ENCODE measurements at regions of chr22 and their contacts with region 1.

Region 1: GRCh38 chr22:41285820-41286638 is at the start of gene RANGAP1:
- DNase-seq: peak; percentile 95 to 100 (median 98)
- ATAC-seq: peak; percentile 85
- H3K4me3 ChIP-seq: peak within 1 kb of the TSS; percentile 100
- H3K4me3 Mint-ChIP-seq: peak within 1 kb of the TSS; percentile 96
- H3K27ac ChIP-seq: peak within 1 kb of the TSS; percentile 95 to 100
- H3K27ac Mint-ChIP-seq: peak within 1 kb of the TSS; percentile 100
- H3K4me1 ChIP-seq: peaks cover 28% of the 10 kb centered on the region
- H3K4me1 Mint-ChIP-seq: peaks cover 46% of the 10 kb centered on the region
- H3K27me3 ChIP-seq: no peaks in the 10 kb centered on the region
- H3K27me3 Mint-ChIP-seq: no peaks in the 10 kb centered on the region
- CTCF ChIP-seq: no peak
- total RNA-seq, gene RANGAP1: 163 to 172 TPM

Region 2: DNA sequence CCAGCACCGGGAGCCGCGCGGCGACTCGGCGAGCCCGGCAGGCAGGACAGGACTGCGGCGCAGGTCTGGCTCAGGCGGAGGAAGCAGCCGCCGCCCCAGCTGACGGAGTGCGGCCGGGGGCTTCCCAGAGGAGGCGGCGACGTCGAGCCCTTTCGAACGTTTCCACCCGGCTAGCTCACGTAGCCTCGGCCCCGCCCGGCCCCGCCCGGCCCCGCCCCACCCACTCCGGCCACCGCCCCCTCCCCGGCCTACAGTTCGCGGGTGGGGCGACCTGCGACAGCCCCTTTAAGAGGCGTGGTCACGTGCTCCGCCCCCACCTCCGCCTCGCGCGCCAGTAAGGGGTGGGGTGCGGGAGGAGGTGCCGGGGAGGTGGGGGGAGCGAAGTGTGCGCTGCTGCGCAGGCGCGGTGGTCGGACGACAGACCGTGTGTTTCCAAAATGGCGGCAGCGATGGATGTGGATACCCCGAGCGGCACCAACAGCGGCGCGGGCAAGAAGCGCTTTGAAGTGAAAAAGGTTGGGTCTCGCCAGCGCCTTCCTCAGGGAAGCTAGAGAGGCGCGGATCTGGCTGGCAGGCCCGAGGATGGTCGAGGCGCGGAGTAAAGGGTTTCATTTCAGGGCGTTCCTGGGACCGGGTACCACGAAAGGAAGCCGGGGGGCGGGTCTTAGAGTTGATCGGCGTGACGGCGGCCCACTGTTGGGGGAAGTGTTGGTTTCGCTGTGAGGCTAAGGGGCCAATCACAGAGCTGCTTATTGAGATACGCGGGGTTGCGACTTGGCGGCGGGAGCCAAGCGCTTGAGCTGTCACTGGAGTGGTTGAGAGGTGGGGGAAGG is 334.9 kb before region 1 on chr22 and contains the start of gene RBX1:
- CTCF ChIA-PET with region 1: no interaction called
- POLR2A ChIA-PET with region 1: interaction called, 21 read pairs
- intact Hi-C with region 1: loop called in 1 of 2 experiments (anchors 1 kb)
- DNase-seq: peak; percentile 97 to 100 (median 99)
- ATAC-seq: peak; percentile 75
- H3K4me3 ChIP-seq: peak within 1 kb of the TSS; percentile 96
- H3K4me3 Mint-ChIP-seq: peak within 1 kb of the TSS; percentile 95
- H3K27ac ChIP-seq: peak within 1 kb of the TSS; percentile 98 to 100
- H3K27ac Mint-ChIP-seq: peak within 1 kb of the TSS; percentile 98
- H3K4me1 ChIP-seq: peaks cover 34% of the 10 kb centered on the region
- H3K4me1 Mint-ChIP-seq: peaks cover 40% of the 10 kb centered on the region
- H3K27me3 ChIP-seq: no peaks in the 10 kb centered on the region
- H3K27me3 Mint-ChIP-seq: no peaks in the 10 kb centered on the region
- CTCF ChIP-seq: no peak
- total RNA-seq, gene RBX1: 19.8 to 21.6 TPM

Region 3: GRCh38 chr22:41237707-41238569 is 48.1 kb before region 1 on chr22:
- CTCF ChIA-PET with region 1: interaction called, 8 read pairs
- POLR2A ChIA-PET with region 1: interaction called, 22 read pairs
- intact Hi-C with region 1: no loop called
- DNase-seq: peak; percentile 74 to 92 (median 84)
- ATAC-seq: peak; percentile 96
- H3K4me3 ChIP-seq: peak overlapping the region; percentile 44
- H3K4me3 Mint-ChIP-seq: peak overlapping the region; percentile 73
- H3K27ac ChIP-seq: no peak overlapping the region
- H3K27ac Mint-ChIP-seq: no peak overlapping the region
- H3K4me1 ChIP-seq: peaks cover 16% of the 10 kb centered on the region
- H3K4me1 Mint-ChIP-seq: peaks cover 5% of the 10 kb centered on the region
- H3K27me3 ChIP-seq: no peaks in the 10 kb centered on the region
- H3K27me3 Mint-ChIP-seq: no peaks in the 10 kb centered on the region
- CTCF ChIP-seq: no peak

Region 4: GRCh38 chr22:41381329-41382097 is 95.5 kb after region 1 on chr22 and contains the start of gene TEF:
- CTCF ChIA-PET with region 1: no interaction called
- POLR2A ChIA-PET with region 1: interaction called, 66 read pairs
- intact Hi-C with region 1: loop called (anchors 1 kb)
- DNase-seq: peak; percentile 96 to 99 (median 98)
- ATAC-seq: peak; percentile 79
- H3K4me3 ChIP-seq: peak within 1 kb of the TSS; percentile 66
- H3K4me3 Mint-ChIP-seq: peak within 1 kb of the TSS; percentile 98
- H3K27ac ChIP-seq: peak within 1 kb of the TSS; percentile 78 to 96
- H3K27ac Mint-ChIP-seq: peak within 1 kb of the TSS; percentile 99
- H3K4me1 ChIP-seq: peaks cover 20% of the 10 kb centered on the region
- H3K4me1 Mint-ChIP-seq: peaks cover 31% of the 10 kb centered on the region
- H3K27me3 ChIP-seq: no peaks in the 10 kb centered on the region
- H3K27me3 Mint-ChIP-seq: no peaks in the 10 kb centered on the region
- CTCF ChIP-seq: no peak
- total RNA-seq, gene TEF: 2.4 to 2.6 TPM

Region 5: GRCh38 chr22:41543854-41544670 is 258.0 kb after region 1 on chr22 and contains the start of gene POLR3H:
- CTCF ChIA-PET with region 1: no interaction called
- POLR2A ChIA-PET with region 1: no interaction called
- intact Hi-C with region 1: loop called in 1 of 2 experiments (anchors 10 kb)
- DNase-seq: peak; percentile 91 to 99 (median 96)
- ATAC-seq: peak; percentile 98
- H3K4me3 ChIP-seq: peak within 1 kb of the TSS; percentile 90
- H3K4me3 Mint-ChIP-seq: peak within 1 kb of the TSS; percentile 98
- H3K27ac ChIP-seq: peak within 1 kb of the TSS; percentile 77 to 81
- H3K27ac Mint-ChIP-seq: peak within 1 kb of the TSS; percentile 85
- H3K4me1 ChIP-seq: peaks cover 26% of the 10 kb centered on the region
- H3K4me1 Mint-ChIP-seq: peaks cover 41% of the 10 kb centered on the region
- H3K27me3 ChIP-seq: no peaks in the 10 kb centered on the region
- H3K27me3 Mint-ChIP-seq: no peaks in the 10 kb centered on the region
- CTCF ChIP-seq: peak; percentile 51
- total RNA-seq, gene POLR3H: 13.4 to 17.3 TPM